ENCODE measurements at regions of chrX and their contacts with region 1.

Region 1: DNA sequence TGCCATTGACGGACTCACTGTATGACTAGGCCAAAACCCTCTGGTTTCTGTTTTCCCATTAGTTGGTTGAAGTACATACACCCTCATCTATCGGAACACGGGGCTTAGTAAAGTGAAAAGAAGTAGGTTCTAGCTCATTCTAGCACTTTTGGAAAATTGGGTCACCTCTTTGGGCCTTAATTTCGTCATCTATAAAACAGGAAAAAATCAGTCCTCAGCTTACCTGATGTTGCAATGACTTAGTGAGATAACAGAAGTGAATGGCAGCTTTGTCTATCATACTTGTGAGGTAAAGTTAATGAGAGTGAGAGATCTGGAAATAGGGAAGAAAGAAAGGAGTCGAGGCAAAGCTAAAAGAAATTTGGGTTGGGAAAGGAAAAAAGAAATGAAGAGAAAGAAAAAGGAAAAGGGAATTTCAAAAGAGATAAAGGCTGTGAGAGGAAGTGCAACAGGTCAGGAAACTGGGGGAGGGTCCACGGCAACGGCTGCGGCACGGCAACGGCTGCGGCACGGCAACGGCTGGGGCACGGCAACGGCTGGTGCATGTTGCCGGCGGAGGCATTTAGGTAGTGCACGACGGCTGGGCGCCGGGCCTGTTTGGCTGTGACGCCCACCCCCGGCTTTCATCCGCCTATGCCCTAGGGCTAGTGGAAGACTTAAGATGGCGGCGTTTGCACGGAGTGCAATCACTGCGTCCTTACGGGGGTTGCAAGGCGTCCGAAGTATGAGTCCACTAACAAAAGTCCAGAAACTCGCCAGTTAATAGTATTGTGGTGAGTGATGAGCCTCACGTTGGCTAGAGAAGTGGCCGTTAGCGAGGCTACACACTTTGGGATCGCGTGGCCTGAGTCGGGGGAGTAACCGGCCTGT is 360.1 kb upstream of the ZCCHC13 start:
- DNase-seq: peak; percentile 77
- H3K4me3 Mint-ChIP-seq: peak overlapping the region; percentile 83
- H3K27ac Mint-ChIP-seq: peak overlapping the region; percentile 89
- H3K4me1 Mint-ChIP-seq: peaks cover 11% of the 10 kb centered on the region
- H3K27me3 Mint-ChIP-seq: no peaks in the 10 kb centered on the region

Region 2: DNA sequence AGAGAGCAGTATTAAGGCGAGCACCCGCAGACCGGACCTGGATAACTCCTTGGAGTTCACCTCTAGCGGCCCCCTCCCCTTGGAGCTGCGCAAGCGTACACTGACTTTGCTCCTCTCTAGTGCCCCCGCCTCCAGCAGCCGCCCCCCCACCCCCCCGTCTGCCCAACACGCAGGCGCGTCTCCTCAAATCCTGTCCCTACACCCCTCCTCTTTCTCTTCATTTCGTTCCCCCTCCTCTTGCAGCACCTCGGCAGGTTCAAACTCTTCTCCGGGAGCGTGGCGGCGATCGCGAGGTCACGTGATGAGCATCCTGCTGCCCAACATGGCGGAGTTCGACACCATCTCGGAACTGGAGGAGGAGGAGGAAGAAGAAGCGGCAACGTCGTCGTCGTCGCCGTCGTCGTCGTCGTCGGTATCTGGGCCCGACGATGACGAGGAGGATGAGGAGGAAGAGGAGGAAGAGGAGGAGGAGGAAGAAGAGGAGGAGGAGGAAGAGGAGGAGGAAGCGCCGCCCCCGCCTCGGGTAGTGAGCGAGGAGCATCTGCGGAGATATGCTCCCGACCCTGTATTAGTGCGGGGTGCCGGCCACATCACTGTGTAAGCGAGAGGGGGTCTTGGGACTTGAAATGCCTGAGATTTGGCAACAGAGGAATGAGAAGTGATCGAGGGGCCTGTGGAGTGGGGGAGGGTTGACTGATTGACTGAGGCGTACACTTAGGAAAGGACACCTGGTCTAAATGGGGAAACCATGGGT is 380.8 kb before region 1 on chrX and contains the start of gene CHIC1:
- intact Hi-C with region 1: loop called (anchors 2 kb)
- DNase-seq: peak; percentile 61
- H3K4me3 Mint-ChIP-seq: peak within 1 kb of the TSS; percentile 97
- H3K27ac Mint-ChIP-seq: peak within 1 kb of the TSS; percentile 95
- H3K4me1 Mint-ChIP-seq: peaks cover 9% of the 10 kb centered on the region
- H3K27me3 Mint-ChIP-seq: no peaks in the 10 kb centered on the region
- total RNA-seq, gene CHIC1: 4.2 and 4.7 TPM in 2 replicates

Region 3: GRCh38 chrX:73977534-73978169 is 33.7 kb after region 1 on chrX:
- intact Hi-C with region 1: loop called (anchors 2 kb)
- DNase-seq: no peak
- H3K4me3 Mint-ChIP-seq: no peak overlapping the region
- H3K27ac Mint-ChIP-seq: peak overlapping the region; percentile 86
- H3K4me1 Mint-ChIP-seq: peaks cover 17% of the 10 kb centered on the region
- H3K27me3 Mint-ChIP-seq: no peaks in the 10 kb centered on the region

Region 4: DNA sequence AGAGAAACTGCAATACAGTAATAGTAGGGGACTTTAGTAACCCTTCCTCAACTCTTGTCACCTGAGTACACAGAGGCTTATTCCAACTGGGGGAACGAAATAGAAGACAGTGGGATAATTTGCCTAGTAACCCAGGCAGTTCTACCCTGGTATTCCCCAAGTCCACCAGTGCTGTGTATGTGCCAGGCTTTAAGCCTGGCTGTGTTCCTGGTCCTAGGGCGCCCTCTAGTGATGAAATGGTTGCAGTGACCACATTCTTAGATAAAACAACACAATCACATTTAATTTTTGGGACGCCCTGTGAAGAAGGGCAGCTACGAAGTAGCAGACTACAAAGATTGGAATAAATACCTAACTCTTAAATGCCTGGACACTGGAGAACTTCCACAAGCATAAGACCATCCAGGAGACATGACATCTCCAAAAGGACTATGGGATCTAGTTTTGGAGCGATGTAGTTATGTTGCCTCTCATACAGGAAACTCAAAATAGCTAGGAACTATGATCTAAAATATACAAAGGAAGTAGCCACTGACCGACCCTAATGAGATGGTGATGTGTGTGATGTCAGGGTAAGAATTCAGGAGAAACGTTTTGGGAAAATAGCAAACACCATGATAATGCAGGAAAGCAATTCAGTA is 71.6 kb after region 1 on chrX:
- intact Hi-C with region 1: loop called (anchors 5 kb)
- DNase-seq: peak; percentile 28
- H3K4me3 Mint-ChIP-seq: no peak overlapping the region
- H3K27ac Mint-ChIP-seq: no peak overlapping the region
- H3K4me1 Mint-ChIP-seq: peaks cover 9% of the 10 kb centered on the region
- H3K27me3 Mint-ChIP-seq: no peaks in the 10 kb centered on the region

Region 5: GRCh38 chrX:74291964-74292807 is 348.3 kb after region 1 on chrX:
- intact Hi-C with region 1: loop called (anchors 1 kb)
- DNase-seq: peak; percentile 68
- H3K4me3 Mint-ChIP-seq: peak overlapping the region; percentile 97
- H3K27ac Mint-ChIP-seq: peak overlapping the region; percentile 100
- H3K4me1 Mint-ChIP-seq: peaks cover 14% of the 10 kb centered on the region
- H3K27me3 Mint-ChIP-seq: no peaks in the 10 kb centered on the region

Measured in activated T-helper 2 cell treated with anti-CD3 and anti-CD28 coated beads, Interferon-gamma antibody, Interleukin-2, Interleukin-4, amounts not matched to agents 10 μg/mL and 5 μg/mL and 100 μg/mL, durations not matched to agents 14 hours and 24 hours and 36 hours (primary cell).